GM12878 (cell line): ENCODE measurements at regions of chr12 and their contacts with region 1.

Region 1: DNA sequence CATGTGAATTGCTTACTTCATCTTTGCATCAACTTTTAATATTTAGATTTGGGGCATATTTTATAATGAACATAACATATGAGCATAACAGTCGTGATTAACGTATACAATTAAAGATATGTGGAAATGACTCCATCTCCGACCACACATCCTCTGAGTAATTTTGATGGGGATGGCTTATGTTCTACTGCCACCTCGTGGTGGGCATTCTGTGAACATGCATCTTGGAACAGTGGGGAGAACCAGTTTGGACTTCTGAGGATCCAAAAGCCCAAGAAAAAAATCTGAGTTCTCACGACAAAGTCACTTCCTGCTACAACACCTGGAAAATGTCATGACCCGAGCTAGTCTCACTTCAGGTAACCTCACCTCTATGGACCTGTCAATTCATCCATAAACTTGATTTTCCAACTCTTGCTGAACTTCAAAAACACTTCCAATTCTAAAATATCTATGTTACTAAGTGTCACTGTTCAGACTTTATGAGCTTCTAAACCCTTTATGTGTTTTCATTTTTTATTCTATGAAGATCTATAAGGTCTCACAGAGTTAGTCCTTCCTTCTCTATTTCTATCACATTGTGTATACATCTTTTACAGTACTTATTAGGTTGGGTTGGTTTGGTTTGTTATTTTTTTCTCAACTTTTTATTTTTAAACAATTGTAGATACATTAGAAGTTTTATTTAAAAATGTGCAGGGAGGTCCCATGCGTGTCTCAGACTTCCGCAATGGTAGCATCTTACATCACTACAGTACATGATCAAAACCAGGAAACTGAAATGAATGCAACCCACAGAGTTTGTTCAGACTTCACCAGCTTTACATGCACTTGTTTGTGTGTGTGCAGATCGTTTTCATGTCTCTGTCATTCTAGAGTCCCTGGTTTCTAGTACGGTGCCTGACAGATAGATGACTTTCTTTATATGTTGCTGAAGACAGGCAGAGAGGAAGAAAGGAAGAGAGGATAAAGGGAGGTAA is 38.2 kb upstream of the STAB2 start:
- DNase-seq: peak; percentile 76
- ATAC-seq: peak; percentile 93
- H3K4me3 ChIP-seq: no peak overlapping the region
- H3K27ac ChIP-seq: peak overlapping the region; percentile 29; the same call in 1 of the 2 replicates
- H3K4me1 ChIP-seq: peaks cover 4% of the 10 kb centered on the region
- H3K27me3 ChIP-seq: no peaks in the 10 kb centered on the region
- CTCF ChIP-seq: peak; percentile 73 to 87 (median 79)
- EP300 ChIP-seq: peak in 1 of 2 experiments; percentile 78; a peak in 1 of 4 replicates
- POLR2A ChIP-seq: no peak
- RAD21 ChIP-seq: peak; percentile 99

Region 2: GRCh38 chr12:102811110-102811737 is 737.7 kb before region 1 on chr12:
- CTCF ChIA-PET with region 1: interaction called, 8 read pairs
- POLR2A ChIA-PET with region 1: no interaction called
- RAD21 ChIA-PET with region 1: interaction called, 7 read pairs
- SMC1A ChIA-PET with region 1: interaction called, 10 read pairs
- in situ Hi-C with region 1: no loop called
- intact Hi-C with region 1: no loop called
- DNase-seq: no peak
- ATAC-seq: peak; percentile 74
- H3K4me3 ChIP-seq: no peak overlapping the region
- H3K27ac ChIP-seq: no peak overlapping the region
- H3K4me1 ChIP-seq: no peaks in the 10 kb centered on the region
- H3K27me3 ChIP-seq: no peaks in the 10 kb centered on the region; a peak in 1 of 4 replicates
- CTCF ChIP-seq: peak; percentile 63 to 66 (median 64); a peak in 5 of 6 replicates
- EP300 ChIP-seq: no peak
- POLR2A ChIP-seq: no peak
- RAD21 ChIP-seq: peak; percentile 77

Region 3: GRCh38 chr12:102896067-102896466 is 652.8 kb before region 1 on chr12:
- CTCF ChIA-PET with region 1: interaction called, 18 read pairs
- POLR2A ChIA-PET with region 1: no interaction called
- RAD21 ChIA-PET with region 1: interaction called, 3 read pairs
- SMC1A ChIA-PET with region 1: interaction called, 4 read pairs
- in situ Hi-C with region 1: no loop called
- intact Hi-C with region 1: no loop called
- DNase-seq: no peak
- ATAC-seq: peak; percentile 81
- H3K4me3 ChIP-seq: no peak overlapping the region
- H3K27ac ChIP-seq: no peak overlapping the region
- H3K4me1 ChIP-seq: no peaks in the 10 kb centered on the region
- H3K27me3 ChIP-seq: 0 out of 4 replicates have a peak, but pooled peaks cover 0 to 2% of the 10 kb centered on the region in 2 experiments
- CTCF ChIP-seq: peak in 2 of 3 experiments; percentile 13 to 34; a peak in 2 of 6 replicates
- EP300 ChIP-seq: no peak
- POLR2A ChIP-seq: no peak
- RAD21 ChIP-seq: no peak

Region 4: GRCh38 chr12:102990419-102990818 is 558.5 kb before region 1 on chr12:
- CTCF ChIA-PET with region 1: interaction called, 12 read pairs
- POLR2A ChIA-PET with region 1: no interaction called
- RAD21 ChIA-PET with region 1: interaction called, 5 read pairs
- SMC1A ChIA-PET with region 1: interaction called, 7 read pairs
- in situ Hi-C with region 1: no loop called
- intact Hi-C with region 1: no loop called
- DNase-seq: no peak
- ATAC-seq: peak; percentile 49
- H3K4me3 ChIP-seq: no peak overlapping the region
- H3K27ac ChIP-seq: no peak overlapping the region
- H3K4me1 ChIP-seq: no peaks in the 10 kb centered on the region; the same call in 1 of the 2 replicates
- H3K27me3 ChIP-seq: no peaks in the 10 kb centered on the region
- CTCF ChIP-seq: 0 out of 6 replicates have a peak, but pooled peaks of 1 of the 3 experiments have one; percentile 14
- EP300 ChIP-seq: no peak
- POLR2A ChIP-seq: no peak
- RAD21 ChIP-seq: peak; percentile 46; the same call in 1 of the 2 replicates

Region 5: DNA sequence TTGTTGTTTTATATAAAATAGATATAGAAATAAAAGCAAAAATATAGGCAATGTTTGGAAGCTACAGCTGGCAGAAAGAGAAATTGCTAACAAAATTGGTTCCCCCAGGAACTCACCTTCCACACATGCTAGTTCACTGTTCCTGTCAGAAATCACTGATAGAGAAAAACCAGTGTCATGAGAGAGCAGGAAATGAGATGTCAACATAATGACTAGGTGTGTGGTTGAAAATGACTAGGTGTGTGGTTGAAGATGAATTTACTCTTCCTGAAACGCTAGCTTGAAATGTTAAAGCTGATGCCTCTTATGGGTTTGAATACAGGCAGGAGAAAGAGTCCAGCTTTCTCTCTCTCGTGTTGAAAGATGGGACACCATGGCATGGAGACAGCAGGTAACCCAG is 269.5 kb before region 1 on chr12:
- CTCF ChIA-PET with region 1: interaction called, 4 read pairs
- POLR2A ChIA-PET with region 1: no interaction called
- RAD21 ChIA-PET with region 1: interaction called, 6 read pairs
- SMC1A ChIA-PET with region 1: interaction called, 6 read pairs
- in situ Hi-C with region 1: no loop called
- intact Hi-C with region 1: loop called (anchors 2 kb)
- DNase-seq: peak; percentile 93
- ATAC-seq: peak; percentile 94
- H3K4me3 ChIP-seq: no peak overlapping the region
- H3K27ac ChIP-seq: peak overlapping the region; percentile 53; the same call in 1 of the 2 replicates
- H3K4me1 ChIP-seq: peaks cover 21% of the 10 kb centered on the region
- H3K27me3 ChIP-seq: no peaks in the 10 kb centered on the region
- CTCF ChIP-seq: no peak
- EP300 ChIP-seq: peak; percentile 83 to 93
- POLR2A ChIP-seq: no peak
- RAD21 ChIP-seq: 0 out of 2 replicates have a peak, but pooled peaks have one; percentile 8

Region 6: GRCh38 chr12:103503977-103504376 is 44.9 kb before region 1 on chr12:
- CTCF ChIA-PET with region 1: interaction called, 228 read pairs
- POLR2A ChIA-PET with region 1: interaction called, 4 read pairs
- RAD21 ChIA-PET with region 1: interaction called, 81 read pairs
- SMC1A ChIA-PET with region 1: interaction called, 334 read pairs
- in situ Hi-C with region 1: no loop called
- intact Hi-C with region 1: loop called (anchors 1 kb)
- DNase-seq: no peak
- ATAC-seq: peak; percentile 26
- H3K4me3 ChIP-seq: no peak overlapping the region
- H3K27ac ChIP-seq: no peak overlapping the region
- H3K4me1 ChIP-seq: peaks cover 22% of the 10 kb centered on the region
- H3K27me3 ChIP-seq: no peaks in the 10 kb centered on the region
- CTCF ChIP-seq: peak; percentile 59 to 80 (median 78)
- EP300 ChIP-seq: no peak
- POLR2A ChIP-seq: no peak
- RAD21 ChIP-seq: peak; percentile 85